ENCODE measurements at regions of chr14 and their contacts with region 1.

Region 1: GRCh38 chr14:40494483-40494882 is 1062.2 kb upstream of the FBXO33 start:
- DNase-seq: no peak
- ATAC-seq: no peak
- H3K4me3 ChIP-seq: no peak overlapping the region
- H3K4me3 Mint-ChIP-seq: no peak overlapping the region
- H3K27ac ChIP-seq: no peak overlapping the region
- H3K27ac Mint-ChIP-seq: no peak overlapping the region
- H3K4me1 ChIP-seq: no peaks in the 10 kb centered on the region
- H3K4me1 Mint-ChIP-seq: no peaks in the 10 kb centered on the region
- H3K27me3 ChIP-seq: no peaks in the 10 kb centered on the region
- H3K27me3 Mint-ChIP-seq: no peaks in the 10 kb centered on the region
- CTCF ChIP-seq: no peak

Region 2: GRCh38 chr14:40394634-40395352 is 99.7 kb before region 1 on chr14:
- CTCF ChIA-PET with region 1: no interaction called
- POLR2A ChIA-PET with region 1: no interaction called
- intact Hi-C with region 1: loop called in 1 of 2 experiments (anchors 1 kb)
- DNase-seq: no peak
- ATAC-seq: no peak
- H3K4me3 ChIP-seq: no peak overlapping the region
- H3K4me3 Mint-ChIP-seq: no peak overlapping the region
- H3K27ac ChIP-seq: no peak overlapping the region
- H3K27ac Mint-ChIP-seq: no peak overlapping the region
- H3K4me1 ChIP-seq: no peaks in the 10 kb centered on the region
- H3K4me1 Mint-ChIP-seq: no peaks in the 10 kb centered on the region
- H3K27me3 ChIP-seq: no peaks in the 10 kb centered on the region
- H3K27me3 Mint-ChIP-seq: no peaks in the 10 kb centered on the region
- CTCF ChIP-seq: no peak

Measured in CD8-positive, alpha-beta T cell (primary cell).